ENCODE measurements at regions of chr1 and their contacts with region 1.

Region 1: DNA sequence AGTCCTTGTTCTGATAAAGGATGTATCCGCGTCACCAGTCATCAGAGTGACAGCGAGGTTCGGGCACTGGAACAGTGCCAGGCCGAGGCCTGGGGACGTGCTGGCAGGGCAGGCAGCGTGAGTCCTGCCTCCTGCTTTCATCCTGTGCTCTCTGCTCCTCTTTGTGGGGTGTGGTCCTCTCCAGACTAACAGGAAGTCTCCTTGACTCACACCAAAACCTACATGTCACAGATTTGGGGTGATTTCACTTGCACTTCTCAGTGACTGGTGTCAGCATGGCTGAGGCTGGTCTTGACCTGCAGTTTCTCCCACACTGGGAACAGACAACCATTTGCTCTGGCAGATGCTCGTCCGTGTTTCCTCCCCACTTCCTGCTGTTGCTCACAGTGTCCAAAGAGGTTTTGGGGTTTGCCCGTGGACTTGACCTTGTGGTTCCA is 8.8 kb upstream of the NLRP3 start:
- DNase-seq: peak; percentile 73
- H3K4me3 Mint-ChIP-seq: no peak overlapping the region
- H3K27ac Mint-ChIP-seq: no peak overlapping the region
- H3K4me1 Mint-ChIP-seq: peaks cover 42% of the 10 kb centered on the region
- H3K27me3 Mint-ChIP-seq: peaks cover 3% of the 10 kb centered on the region

Region 2: GRCh38 chr1:247210376-247211117 is 196.7 kb before region 1 on chr1:
- CTCF ChIA-PET with region 1: no interaction called
- intact Hi-C with region 1: loop called (anchors 2 kb)
- DNase-seq: peak; percentile 98
- H3K4me3 Mint-ChIP-seq: peak overlapping the region; percentile 90
- H3K27ac Mint-ChIP-seq: peak overlapping the region; percentile 93
- H3K4me1 Mint-ChIP-seq: peaks cover 56% of the 10 kb centered on the region
- H3K27me3 Mint-ChIP-seq: no peaks in the 10 kb centered on the region

Region 3: DNA sequence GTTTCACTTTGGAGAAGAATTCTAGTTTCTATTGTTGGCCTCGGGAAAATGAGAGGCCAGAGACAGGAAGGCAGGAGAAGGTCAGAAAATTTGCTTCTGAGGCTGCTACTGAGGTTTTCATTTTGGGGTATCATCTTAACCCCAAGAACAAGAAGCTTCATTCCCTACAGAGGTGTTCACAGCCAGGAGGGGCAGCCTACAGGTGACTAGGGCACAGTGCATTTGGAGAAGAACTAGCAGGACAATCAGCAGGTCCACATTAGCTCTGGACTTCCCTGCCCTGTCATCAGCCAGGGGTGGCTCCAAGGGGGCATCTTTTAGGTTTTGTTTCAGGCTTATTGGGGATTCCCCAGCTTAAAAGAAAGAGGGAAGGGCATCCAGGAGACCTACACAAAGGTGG is 63.4 kb before region 1 on chr1:
- CTCF ChIA-PET with region 1: no interaction called
- intact Hi-C with region 1: loop called (anchors 1 kb)
- DNase-seq: no peak
- H3K4me3 Mint-ChIP-seq: no peak overlapping the region
- H3K27ac Mint-ChIP-seq: no peak overlapping the region
- H3K4me1 Mint-ChIP-seq: peaks cover 14% of the 10 kb centered on the region
- H3K27me3 Mint-ChIP-seq: peaks cover 2% of the 10 kb centered on the region

Region 4: GRCh38 chr1:247456914-247457639 is 49.9 kb after region 1 on chr1:
- CTCF ChIA-PET with region 1: no interaction called
- intact Hi-C with region 1: loop called (anchors 1 kb)
- DNase-seq: peak; percentile 34
- H3K4me3 Mint-ChIP-seq: no peak overlapping the region
- H3K27ac Mint-ChIP-seq: no peak overlapping the region
- H3K4me1 Mint-ChIP-seq: peaks cover 11% of the 10 kb centered on the region
- H3K27me3 Mint-ChIP-seq: peaks cover 8% of the 10 kb centered on the region